ENCODE measurements at regions of chr7 and their contacts with region 1.

Region 1: GRCh38 chr7:21427182-21427870 is 557 bp upstream of the SP4 start:
- DNase-seq: peak; percentile 97 to 99 (median 97)
- H3K4me3 ChIP-seq: peak overlapping the region; percentile 74 to 96 (median 95)
- H3K4me3 Mint-ChIP-seq: peak overlapping the region; percentile 97 to 99
- H3K27ac ChIP-seq: peak overlapping the region; percentile 89 to 95
- H3K27ac Mint-ChIP-seq: peak overlapping the region; percentile 97 to 100 (median 99)
- H3K4me1 ChIP-seq: peaks cover 17 to 35% of the 10 kb centered on the region in 2 donors
- H3K4me1 Mint-ChIP-seq: peaks cover 42% of the 10 kb centered on the region
- H3K27me3 ChIP-seq: no peaks in the 10 kb centered on the region
- H3K27me3 Mint-ChIP-seq: peaks cover 0 to 2% (median 0%) of the 10 kb centered on the region in 3 donors
- CTCF ChIP-seq: no peak

Region 2: DNA sequence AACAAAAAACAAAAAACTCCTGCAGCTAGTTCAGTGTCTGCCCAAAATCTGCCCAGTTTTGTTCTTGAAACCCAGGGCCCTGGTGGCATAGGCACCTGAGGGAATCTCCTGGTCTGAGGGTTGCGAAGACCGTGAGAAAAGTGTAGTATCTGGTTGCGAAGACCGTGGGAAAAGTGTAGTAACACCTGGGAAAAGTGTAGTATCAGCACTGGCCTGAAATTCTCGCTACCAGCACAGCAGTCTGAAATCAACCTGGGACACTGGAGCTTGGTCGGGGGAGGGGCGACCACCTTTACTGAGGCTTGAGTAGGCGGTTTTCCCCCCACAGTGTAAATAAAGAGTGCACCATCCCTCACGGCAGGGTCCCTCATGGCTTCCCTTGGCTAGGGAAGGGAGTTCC is 82.0 kb before region 1 on chr7:
- intact Hi-C with region 1: no loop called
- DNase-seq: no peak
- H3K4me3 ChIP-seq: no peak overlapping the region
- H3K4me3 Mint-ChIP-seq: no peak overlapping the region
- H3K27ac ChIP-seq: no peak overlapping the region
- H3K27ac Mint-ChIP-seq: no peak overlapping the region
- H3K4me1 ChIP-seq: peaks cover 0 to 7% of the 10 kb centered on the region in 2 donors
- H3K4me1 Mint-ChIP-seq: peaks cover 7% of the 10 kb centered on the region
- H3K27me3 ChIP-seq: no peaks in the 10 kb centered on the region
- H3K27me3 Mint-ChIP-seq: peaks cover 0 to 2% (median 0%) of the 10 kb centered on the region in 3 donors
- CTCF ChIP-seq: no peak

Region 3: DNA sequence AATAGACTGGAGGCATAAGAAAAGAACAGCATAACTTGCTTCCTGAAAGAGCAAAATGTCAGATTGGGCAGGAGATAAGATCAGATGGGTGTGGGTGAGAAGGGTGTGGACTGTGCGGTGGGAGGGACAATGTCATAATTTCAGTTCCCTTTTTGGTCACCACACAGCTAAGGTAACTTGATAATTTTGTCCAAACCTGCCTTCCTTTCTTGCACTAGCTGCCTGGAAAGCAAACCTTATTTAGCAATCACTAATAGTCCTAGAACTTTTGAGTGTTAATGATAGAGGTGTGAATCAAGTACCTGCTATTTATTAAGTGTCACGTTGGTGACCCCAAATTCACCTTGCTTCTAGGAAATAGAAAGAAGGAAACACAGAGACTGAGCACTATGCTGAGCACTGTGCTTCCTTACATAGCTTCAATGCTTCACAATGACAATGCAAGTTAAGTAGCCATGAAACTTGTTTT is 71.9 kb before region 1 on chr7:
- intact Hi-C with region 1: loop called (anchors 5 kb)
- DNase-seq: peak; percentile 64 to 70 (median 67)
- H3K4me3 ChIP-seq: peak overlapping the region in 1 of 3 experiments; percentile 30
- H3K4me3 Mint-ChIP-seq: peak overlapping the region in 1 of 2 donors; percentile 50
- H3K27ac ChIP-seq: peak overlapping the region in 1 of 2 donors; percentile 70
- H3K27ac Mint-ChIP-seq: peak overlapping the region; percentile 16 to 91 (median 66)
- H3K4me1 ChIP-seq: peaks cover 69 to 77% of the 10 kb centered on the region in 2 donors
- H3K4me1 Mint-ChIP-seq: peaks cover 66% of the 10 kb centered on the region
- H3K27me3 ChIP-seq: no peaks in the 10 kb centered on the region
- H3K27me3 Mint-ChIP-seq: peaks cover 0 to 2% (median 0%) of the 10 kb centered on the region in 3 donors
- CTCF ChIP-seq: no peak